B cell (primary cell): ENCODE measurements at regions of chr2 and their contacts with region 1.

Region 1: GRCh38 chr2:191030521-191031154 is 16.7 kb upstream of the STAT1 start:
- DNase-seq: peak; percentile 73
- ATAC-seq: peak; percentile 77
- H3K4me3 ChIP-seq: no peak overlapping the region
- H3K4me3 Mint-ChIP-seq: peak overlapping the region; percentile 5
- H3K27ac ChIP-seq: no peak overlapping the region
- H3K27ac Mint-ChIP-seq: no peak overlapping the region
- H3K4me1 ChIP-seq: peaks cover 0 to 6% of the 10 kb centered on the region in 2 donors
- H3K4me1 Mint-ChIP-seq: peaks cover 3% of the 10 kb centered on the region
- H3K27me3 ChIP-seq: no peaks in the 10 kb centered on the region
- H3K27me3 Mint-ChIP-seq: no peaks in the 10 kb centered on the region
- CTCF ChIP-seq: peak; percentile 82

Region 2: GRCh38 chr2:190781604-190782198 is 248.9 kb before region 1 on chr2:
- CTCF ChIA-PET with region 1: interaction called, 13 read pairs
- POLR2A ChIA-PET with region 1: no interaction called
- intact Hi-C with region 1: no loop called
- DNase-seq: peak; percentile 63
- ATAC-seq: peak; percentile 53
- H3K4me3 ChIP-seq: no peak overlapping the region
- H3K4me3 Mint-ChIP-seq: no peak overlapping the region
- H3K27ac ChIP-seq: no peak overlapping the region
- H3K27ac Mint-ChIP-seq: no peak overlapping the region
- H3K4me1 ChIP-seq: no peaks in the 10 kb centered on the region
- H3K4me1 Mint-ChIP-seq: no peaks in the 10 kb centered on the region
- H3K27me3 ChIP-seq: no peaks in the 10 kb centered on the region
- H3K27me3 Mint-ChIP-seq: peaks cover 12% of the 10 kb centered on the region
- CTCF ChIP-seq: peak; percentile 82

Region 3: GRCh38 chr2:190849774-190850173 is 180.9 kb before region 1 on chr2:
- CTCF ChIA-PET with region 1: interaction called, 10 read pairs
- POLR2A ChIA-PET with region 1: no interaction called
- intact Hi-C with region 1: loop called (anchors 1 kb)
- DNase-seq: no peak
- ATAC-seq: no peak
- H3K4me3 ChIP-seq: no peak overlapping the region
- H3K4me3 Mint-ChIP-seq: no peak overlapping the region
- H3K27ac ChIP-seq: no peak overlapping the region
- H3K27ac Mint-ChIP-seq: no peak overlapping the region
- H3K4me1 ChIP-seq: peaks cover 7 to 9% of the 10 kb centered on the region in 2 donors
- H3K4me1 Mint-ChIP-seq: peaks cover 12% of the 10 kb centered on the region
- H3K27me3 ChIP-seq: no peaks in the 10 kb centered on the region
- H3K27me3 Mint-ChIP-seq: no peaks in the 10 kb centered on the region
- CTCF ChIP-seq: no peak

Region 4: DNA sequence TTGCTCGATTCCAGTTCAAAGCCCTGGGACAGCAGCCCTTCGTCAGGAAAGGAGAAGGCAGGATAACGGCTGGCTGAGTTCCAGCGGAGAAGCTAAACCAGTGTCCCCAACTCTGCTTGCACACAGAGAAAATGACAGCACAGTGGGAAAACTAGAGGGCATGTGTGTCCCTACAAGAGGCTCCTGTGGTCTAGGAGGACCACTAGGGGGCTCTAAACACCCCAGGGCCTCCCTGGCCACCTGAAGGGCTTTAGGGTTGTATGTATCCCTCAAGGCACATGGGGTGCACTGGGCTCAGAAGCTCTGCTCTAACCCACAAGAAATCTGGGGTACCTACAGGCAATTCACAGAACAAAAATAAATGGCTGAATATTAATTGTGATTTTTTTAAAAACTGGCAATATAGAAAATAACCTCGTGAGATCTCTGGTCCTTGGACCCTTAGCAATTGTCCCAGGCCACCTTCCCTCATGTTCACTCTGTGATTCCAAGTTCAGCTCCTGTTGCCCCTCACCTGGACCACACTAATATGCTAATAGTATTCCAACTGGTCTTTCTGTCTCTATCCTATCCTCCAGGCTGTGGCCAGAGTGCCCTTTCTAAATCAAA is 34.2 kb before region 1 on chr2:
- CTCF ChIA-PET with region 1: interaction called, 5 read pairs
- POLR2A ChIA-PET with region 1: no interaction called
- intact Hi-C with region 1: loop called (anchors 1 kb)
- DNase-seq: peak; percentile 43
- ATAC-seq: peak; percentile 68
- H3K4me3 ChIP-seq: no peak overlapping the region
- H3K4me3 Mint-ChIP-seq: no peak overlapping the region
- H3K27ac ChIP-seq: no peak overlapping the region
- H3K27ac Mint-ChIP-seq: no peak overlapping the region
- H3K4me1 ChIP-seq: no peaks in the 10 kb centered on the region
- H3K4me1 Mint-ChIP-seq: no peaks in the 10 kb centered on the region
- H3K27me3 ChIP-seq: no peaks in the 10 kb centered on the region
- H3K27me3 Mint-ChIP-seq: no peaks in the 10 kb centered on the region
- CTCF ChIP-seq: peak; percentile 56

Region 5: DNA sequence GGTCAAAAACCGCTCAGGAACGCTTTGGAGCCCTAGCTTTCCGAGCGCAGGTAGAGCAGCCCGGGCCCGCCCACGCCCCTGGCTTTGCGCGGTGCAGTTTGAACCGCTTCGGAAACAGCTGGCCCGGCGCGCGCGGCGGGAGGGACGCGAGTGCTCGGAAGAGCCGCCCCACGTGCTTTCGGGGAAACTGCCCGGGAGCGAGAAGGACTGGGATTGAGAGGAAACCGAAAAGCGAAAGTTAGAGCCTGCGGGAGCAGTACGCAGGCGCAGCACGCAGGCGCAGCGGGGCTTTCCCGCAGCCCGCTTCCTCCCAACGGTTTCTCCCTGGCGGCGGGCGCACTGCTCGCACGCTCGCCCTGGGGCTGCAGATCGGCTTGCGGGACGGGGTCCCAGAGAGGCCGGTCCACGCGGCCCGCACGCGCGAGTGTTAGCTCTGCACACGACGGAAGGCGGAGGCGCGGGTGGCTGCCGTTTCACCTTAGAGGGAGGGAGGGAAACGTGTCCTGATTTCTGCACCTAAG is 10.4 kb before region 1 on chr2:
- CTCF ChIA-PET with region 1: interaction called, 7 read pairs
- POLR2A ChIA-PET with region 1: no interaction called
- intact Hi-C with region 1: loop called (anchors 1 kb)
- DNase-seq: peak; percentile 98
- ATAC-seq: peak; percentile 90
- H3K4me3 ChIP-seq: peak overlapping the region; percentile 76 to 94 (median 83)
- H3K4me3 Mint-ChIP-seq: no peak overlapping the region
- H3K27ac ChIP-seq: peak overlapping the region; percentile 84 to 91
- H3K27ac Mint-ChIP-seq: no peak overlapping the region
- H3K4me1 ChIP-seq: peaks cover 16 to 22% of the 10 kb centered on the region in 2 donors
- H3K4me1 Mint-ChIP-seq: peaks cover 9% of the 10 kb centered on the region
- H3K27me3 ChIP-seq: no peaks in the 10 kb centered on the region
- H3K27me3 Mint-ChIP-seq: no peaks in the 10 kb centered on the region
- CTCF ChIP-seq: peak; percentile 17